MCF 10A (cell line): ENCODE measurements at regions of chr18 and their contacts with region 1.

Region 1: GRCh38 chr18:63367053-63367953 is at the start of gene KDSR:
- DNase-seq: peak; percentile 98
- H3K4me3 Mint-ChIP-seq: peak within 1 kb of the TSS; percentile 97
- H3K27ac Mint-ChIP-seq: peak within 1 kb of the TSS; percentile 78
- H3K4me1 Mint-ChIP-seq: peaks cover 24% of the 10 kb centered on the region
- H3K27me3 Mint-ChIP-seq: no peaks in the 10 kb centered on the region
- CTCF ChIP-seq: no peak
- total RNA-seq, gene KDSR: 97.4 and 108 TPM in 2 replicates

Region 2: DNA sequence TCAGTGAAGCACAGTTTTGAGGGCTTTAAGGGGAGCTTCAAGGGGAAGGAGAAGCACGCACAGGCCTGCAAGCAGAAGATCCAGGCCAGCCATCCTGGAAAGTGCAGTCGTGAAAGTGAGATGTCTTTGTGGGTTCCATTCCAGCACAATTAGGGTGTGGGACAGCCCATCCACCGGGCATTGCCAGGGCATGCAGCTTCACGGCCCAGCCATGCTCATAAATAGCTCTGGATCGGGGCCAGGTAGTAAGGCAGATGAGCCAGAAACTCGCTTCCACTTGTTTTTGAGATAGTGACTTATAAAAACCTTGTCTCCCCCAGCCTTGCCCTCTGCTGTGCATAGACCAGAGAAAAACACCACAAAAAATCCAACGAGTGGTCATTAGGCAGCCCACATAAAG is 21.3 kb before region 1 on chr18:
- CTCF ChIA-PET with region 1: interaction called, 3 read pairs
- POLR2A ChIA-PET with region 1: interaction called, 32 read pairs
- intact Hi-C with region 1: no loop called
- DNase-seq: peak; percentile 52
- H3K4me3 Mint-ChIP-seq: no peak overlapping the region
- H3K27ac Mint-ChIP-seq: peak overlapping the region; percentile 87
- H3K4me1 Mint-ChIP-seq: peaks cover 29% of the 10 kb centered on the region
- H3K27me3 Mint-ChIP-seq: no peaks in the 10 kb centered on the region
- CTCF ChIP-seq: no peak

Region 3: DNA sequence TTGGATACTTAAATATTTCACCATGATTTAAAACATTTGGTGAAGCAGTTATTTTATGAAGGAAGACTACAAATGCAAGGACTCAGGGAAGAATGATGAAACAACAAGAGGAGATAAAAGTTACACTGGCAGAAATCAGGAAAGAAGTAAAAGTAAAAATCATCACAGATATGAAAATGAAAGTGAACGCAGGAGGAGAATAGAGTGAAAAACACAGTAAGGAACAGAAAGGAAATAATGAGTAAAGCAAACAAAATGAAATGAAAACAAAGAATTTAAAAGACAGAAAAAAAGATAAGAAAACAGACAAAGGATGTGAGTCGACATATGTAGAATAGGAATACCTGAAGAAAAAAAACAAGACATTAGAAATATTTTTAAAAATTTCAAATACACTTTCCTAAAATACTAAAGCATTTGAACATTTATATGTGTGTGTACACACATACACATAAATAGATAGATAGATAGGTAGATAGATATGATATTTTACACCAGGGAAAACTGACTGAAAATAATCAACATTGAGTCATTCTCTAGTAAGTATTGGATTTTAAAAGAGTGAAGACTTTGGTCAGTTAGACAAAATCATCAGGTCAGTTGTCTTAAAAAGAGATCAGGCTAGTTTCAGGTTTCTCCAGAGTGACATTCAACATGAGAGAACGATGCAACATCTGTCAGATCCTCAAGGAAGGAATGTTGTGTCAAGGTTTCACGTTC is 11.8 kb after region 1 on chr18:
- CTCF ChIA-PET with region 1: interaction called, 5 read pairs
- POLR2A ChIA-PET with region 1: interaction called, 16 read pairs
- intact Hi-C with region 1: no loop called
- DNase-seq: no peak
- H3K4me3 Mint-ChIP-seq: no peak overlapping the region
- H3K27ac Mint-ChIP-seq: no peak overlapping the region
- H3K4me1 Mint-ChIP-seq: peaks cover 16% of the 10 kb centered on the region
- H3K27me3 Mint-ChIP-seq: no peaks in the 10 kb centered on the region
- CTCF ChIP-seq: no peak

Region 4: GRCh38 chr18:63422087-63422809 is 54.9 kb after region 1 on chr18 and contains the start of gene VPS4B:
- CTCF ChIA-PET with region 1: interaction called, 3 read pairs
- POLR2A ChIA-PET with region 1: interaction called, 51 read pairs
- intact Hi-C with region 1: loop called (anchors 1 kb)
- DNase-seq: peak; percentile 99
- H3K4me3 Mint-ChIP-seq: peak within 1 kb of the TSS; percentile 91
- H3K27ac Mint-ChIP-seq: peak within 1 kb of the TSS; percentile 100
- H3K4me1 Mint-ChIP-seq: peaks cover 12% of the 10 kb centered on the region
- H3K27me3 Mint-ChIP-seq: no peaks in the 10 kb centered on the region
- CTCF ChIP-seq: no peak
- total RNA-seq, gene VPS4B: 67.8 and 89.8 TPM in 2 replicates

Region 5: DNA sequence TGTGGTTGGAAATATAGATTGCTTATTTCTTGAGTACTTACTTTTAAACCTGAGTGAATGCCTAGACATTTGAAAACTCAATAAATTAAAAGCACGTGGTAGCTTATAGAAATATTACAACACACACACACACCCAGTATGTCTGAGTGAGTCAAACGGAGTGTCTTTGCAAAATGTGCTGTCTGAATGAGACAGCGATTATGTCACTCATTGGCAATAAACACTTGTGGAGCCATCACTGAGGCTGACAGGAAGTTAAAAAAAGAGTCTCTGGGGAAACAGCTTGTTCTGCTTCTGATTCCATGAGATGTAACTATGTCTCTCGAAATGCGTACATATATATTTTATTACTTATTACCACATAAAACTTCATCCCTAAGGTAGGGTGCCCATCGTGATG is 77.3 kb after region 1 on chr18:
- CTCF ChIA-PET with region 1: interaction called, 22 read pairs
- POLR2A ChIA-PET with region 1: interaction called, 31 read pairs
- intact Hi-C with region 1: loop called (anchors 1 kb)
- DNase-seq: peak; percentile 95
- H3K4me3 Mint-ChIP-seq: peak overlapping the region; percentile 46
- H3K27ac Mint-ChIP-seq: peak overlapping the region; percentile 74
- H3K4me1 Mint-ChIP-seq: peaks cover 40% of the 10 kb centered on the region
- H3K27me3 Mint-ChIP-seq: no peaks in the 10 kb centered on the region
- CTCF ChIP-seq: no peak

Region 6: GRCh38 chr18:63505566-63506335 is 138.4 kb after region 1 on chr18:
- CTCF ChIA-PET with region 1: no interaction called
- POLR2A ChIA-PET with region 1: interaction called, 3 read pairs
- intact Hi-C with region 1: loop called (anchors 10 kb)
- DNase-seq: peak; percentile 72
- H3K4me3 Mint-ChIP-seq: no peak overlapping the region
- H3K27ac Mint-ChIP-seq: peak overlapping the region; percentile 77
- H3K4me1 Mint-ChIP-seq: peaks cover 6% of the 10 kb centered on the region
- H3K27me3 Mint-ChIP-seq: no peaks in the 10 kb centered on the region
- CTCF ChIP-seq: peak; percentile 67